ENCODE measurements at regions of chr20 and their contacts with region 1.

Region 1: GRCh38 chr20:59403261-59403961 is 103.0 kb downstream of the EDN3 start:
- DNase-seq: peak in 9 of 10 donors; percentile 24 to 79 (median 58)
- H3K4me3 ChIP-seq: peak overlapping the region in 57 of 59 donors; percentile 1 to 59 (median 42)
- H3K27ac ChIP-seq: peak overlapping the region in 31 of 59 donors; percentile 1 to 74 (median 32)
- H3K27me3 ChIP-seq: peaks cover 0 to 93% (median 45%) of the 10 kb centered on the region in 45 donors
- CTCF ChIP-seq: peak; percentile 82 to 100 (median 98)

Region 2: DNA sequence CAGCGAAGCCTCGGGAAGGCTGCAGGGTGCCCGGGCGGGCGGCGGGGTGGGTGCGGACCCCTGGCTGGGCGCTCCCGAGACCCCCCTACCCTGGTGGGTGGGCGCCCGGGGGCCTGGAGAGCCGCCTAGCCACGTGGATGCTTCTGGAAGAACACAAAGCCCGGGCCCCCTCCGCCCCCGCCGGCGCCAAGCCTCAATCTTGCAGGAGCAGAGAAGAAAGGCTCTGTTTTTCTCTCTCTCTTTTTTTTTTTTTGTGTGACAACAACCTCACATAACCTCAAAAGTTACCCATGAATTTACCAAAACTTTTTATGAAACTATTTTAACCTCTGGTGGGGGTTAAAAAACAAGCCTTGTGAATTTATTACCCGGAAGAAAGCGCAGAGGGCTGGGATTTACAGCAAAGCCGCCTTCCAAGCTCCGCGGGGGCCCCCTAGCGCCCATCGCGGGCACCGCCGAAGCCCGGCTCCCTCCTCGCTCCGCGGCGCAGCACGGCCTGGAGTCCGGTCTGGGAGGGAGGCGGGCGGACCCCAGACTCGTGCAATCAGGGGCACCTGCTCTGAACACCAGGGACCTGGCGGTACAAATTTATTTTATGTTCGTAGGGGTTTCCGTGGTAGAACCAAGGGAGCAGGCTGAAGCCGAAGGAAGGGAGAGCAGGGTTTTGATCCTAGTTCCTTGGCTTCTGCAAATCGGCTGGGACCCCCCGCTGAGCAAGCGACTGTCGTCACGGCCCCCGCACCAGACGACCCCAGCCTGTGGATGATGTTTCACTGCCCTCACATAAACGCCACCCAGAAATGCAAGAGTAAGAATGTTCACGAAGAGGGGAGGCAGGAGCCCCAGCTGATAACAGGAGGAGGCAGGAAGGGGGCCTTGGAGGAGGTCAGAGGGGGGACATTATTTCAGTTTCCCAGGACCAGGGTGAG is 180.9 kb before region 1 on chr20:
- intact Hi-C with region 1: loop called (anchors 5 kb)
- DNase-seq: peak; percentile 61 to 87 (median 74)
- H3K4me3 ChIP-seq: peak overlapping the region; percentile 21 to 83 (median 64)
- H3K27ac ChIP-seq: peak overlapping the region in 42 of 59 donors; percentile 4 to 81 (median 52)
- H3K27me3 ChIP-seq: no peaks in the 10 kb centered on the region
- CTCF ChIP-seq: peak; percentile 71 to 98 (median 93)

Region 3: DNA sequence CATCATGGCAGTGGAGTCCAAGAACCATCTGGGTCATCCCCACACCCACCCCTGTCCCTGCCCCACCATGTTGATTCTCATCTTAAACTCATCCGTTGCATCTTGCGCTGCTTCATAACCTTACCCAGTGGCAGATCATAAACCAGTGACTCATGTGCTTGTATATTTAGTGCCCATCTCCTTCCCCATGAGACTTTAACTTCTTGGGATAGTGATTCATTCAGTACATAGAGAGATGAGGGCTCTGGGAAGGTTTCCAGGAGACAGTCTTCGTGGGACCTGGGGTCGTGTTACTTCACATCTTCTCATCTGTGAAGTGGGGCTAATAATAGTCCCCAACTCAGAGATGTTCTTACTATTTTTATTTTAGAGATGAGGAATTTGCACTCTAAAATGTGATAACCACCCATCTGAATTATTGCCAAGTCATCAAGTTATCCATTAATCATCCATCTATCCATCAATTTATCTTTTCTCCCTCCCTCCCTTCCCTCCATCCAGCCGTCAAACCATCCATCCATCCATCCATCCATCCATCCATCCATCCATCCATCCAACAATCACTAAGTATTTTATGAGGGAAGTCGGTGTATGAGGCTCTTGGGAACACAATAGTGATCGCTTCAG is 51.9 kb before region 1 on chr20:
- intact Hi-C with region 1: no loop called
- DNase-seq: no peak
- H3K4me3 ChIP-seq: no peak overlapping the region
- H3K27ac ChIP-seq: no peak overlapping the region
- H3K27me3 ChIP-seq: peaks cover 0 to 13% (median 0%) of the 10 kb centered on the region in 45 donors
- CTCF ChIP-seq: no peak

Region 4: DNA sequence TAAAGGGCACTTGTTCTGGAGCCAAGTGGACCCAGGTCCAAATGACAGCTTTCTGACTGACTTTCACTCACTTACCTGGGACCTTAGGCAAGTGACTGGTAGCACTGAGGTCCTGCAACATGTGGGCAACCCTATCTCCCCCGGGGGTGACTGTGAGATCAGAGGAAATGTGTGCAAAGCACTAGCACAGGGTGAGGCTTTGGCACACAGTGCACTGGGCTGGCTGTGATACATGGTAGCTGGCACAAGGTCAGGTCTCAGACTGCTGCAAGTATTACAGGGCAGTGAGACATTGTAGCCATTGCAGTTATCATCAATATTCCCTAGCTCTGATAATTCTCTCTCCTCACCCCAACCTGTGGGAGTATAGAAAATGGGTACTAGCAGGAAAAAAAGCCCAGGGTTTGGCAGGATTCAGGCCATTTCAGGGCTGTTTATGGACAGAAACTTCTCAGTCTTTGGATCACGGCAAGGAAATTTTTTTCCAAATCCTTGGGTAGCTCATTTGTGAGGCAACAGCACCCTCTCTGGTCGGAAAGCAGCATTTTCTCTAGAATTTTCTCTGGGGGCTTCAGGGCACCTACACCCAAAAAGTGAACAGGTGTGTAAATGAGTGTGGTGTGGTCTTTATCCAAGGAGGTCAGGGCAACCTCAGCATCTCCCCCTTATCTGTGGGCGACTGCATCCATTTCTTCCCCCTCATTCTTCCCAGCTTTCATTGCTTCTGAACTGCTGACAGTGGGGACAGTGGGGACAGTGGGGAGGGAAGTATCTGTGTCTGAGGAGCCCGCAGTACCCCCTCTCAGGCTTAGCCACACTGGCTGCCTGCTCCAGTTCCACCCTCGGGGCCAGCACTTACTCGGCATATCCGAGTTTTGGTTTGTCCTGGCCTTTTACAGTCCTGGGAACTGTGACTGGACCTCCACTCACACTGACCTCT is 52.3 kb after region 1 on chr20:
- intact Hi-C with region 1: no loop called
- DNase-seq: peak in 2 of 10 donors; percentile 34 to 60
- H3K4me3 ChIP-seq: peak overlapping the region in 1 of 59 donors; percentile 17
- H3K27ac ChIP-seq: peak overlapping the region in 3 of 59 donors; percentile 9 to 57 (median 28)
- H3K27me3 ChIP-seq: peaks cover 0 to 18% (median 0%) of the 10 kb centered on the region in 45 donors
- CTCF ChIP-seq: peak; percentile 31 to 81 (median 66)

Region 5: GRCh38 chr20:59469267-59470252 is 66.1 kb after region 1 on chr20:
- intact Hi-C with region 1: no loop called
- DNase-seq: no peak
- H3K4me3 ChIP-seq: no peak overlapping the region
- H3K27ac ChIP-seq: no peak overlapping the region
- H3K27me3 ChIP-seq: peaks cover 0 to 7% (median 0%) of the 10 kb centered on the region in 45 donors
- CTCF ChIP-seq: no peak

Measured in dorsolateral prefrontal cortex (tissue), 120 donors.